AG04449 (cell line): ENCODE measurements at regions of chrX and their contacts with region 1.

Region 1: DNA sequence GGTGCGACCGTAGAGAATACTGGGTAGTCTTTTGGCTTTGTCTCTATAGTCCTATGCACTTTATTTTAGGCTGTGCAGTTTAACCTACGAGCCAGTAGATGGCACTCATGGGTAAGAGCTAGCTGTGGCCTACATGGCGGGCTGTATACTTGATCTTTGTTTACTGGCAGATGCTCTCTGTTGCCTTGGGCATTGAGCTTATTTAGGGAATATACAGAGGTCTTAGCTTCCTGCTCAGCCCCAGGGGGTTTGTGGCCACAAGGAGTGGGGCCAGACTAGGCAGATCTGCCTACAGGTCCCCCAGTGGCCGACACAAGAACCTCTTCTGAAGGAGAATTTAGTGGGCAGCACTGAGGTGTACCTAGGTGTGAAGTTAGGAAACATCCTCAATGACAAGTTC is 227.6 kb upstream of the HDX start:
- DNase-seq: no peak
- H3K4me3 ChIP-seq: no peak overlapping the region
- CTCF ChIP-seq: peak; percentile 57

Region 2: DNA sequence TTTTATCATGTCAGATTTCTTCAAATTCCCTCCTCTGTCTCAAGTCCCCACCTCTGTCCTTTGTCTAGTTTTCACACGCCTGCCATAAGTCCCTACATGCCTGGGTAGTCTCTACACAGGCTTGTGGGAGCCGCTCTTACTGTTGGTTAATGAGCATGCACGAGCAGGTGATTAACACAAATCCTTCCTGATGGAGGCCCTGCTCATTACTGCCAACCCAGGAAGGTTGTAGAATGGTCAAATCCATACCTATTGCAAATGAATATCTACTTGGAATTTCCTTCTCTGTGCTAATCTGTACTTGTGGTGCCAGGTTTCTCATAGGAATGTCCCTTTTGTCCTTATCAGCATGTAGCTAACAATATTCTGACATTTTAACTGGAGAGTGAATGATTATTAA is 19.2 kb before region 1 on chrX:
- CTCF ChIA-PET with region 1: no interaction called
- POLR2A ChIA-PET with region 1: no interaction called
- DNase-seq: no peak
- H3K4me3 ChIP-seq: no peak overlapping the region
- CTCF ChIP-seq: no peak

Region 3: GRCh38 chrX:84760560-84760959 is 30.8 kb after region 1 on chrX:
- CTCF ChIA-PET with region 1: no interaction called
- POLR2A ChIA-PET with region 1: no interaction called
- DNase-seq: no peak
- H3K4me3 ChIP-seq: no peak overlapping the region
- CTCF ChIP-seq: no peak

Region 4: GRCh38 chrX:84907324-84907968 is 177.6 kb after region 1 on chrX:
- CTCF ChIA-PET with region 1: interaction called, 21 read pairs
- POLR2A ChIA-PET with region 1: no interaction called
- DNase-seq: no peak
- H3K4me3 ChIP-seq: no peak overlapping the region
- CTCF ChIP-seq: no peak

Region 5: DNA sequence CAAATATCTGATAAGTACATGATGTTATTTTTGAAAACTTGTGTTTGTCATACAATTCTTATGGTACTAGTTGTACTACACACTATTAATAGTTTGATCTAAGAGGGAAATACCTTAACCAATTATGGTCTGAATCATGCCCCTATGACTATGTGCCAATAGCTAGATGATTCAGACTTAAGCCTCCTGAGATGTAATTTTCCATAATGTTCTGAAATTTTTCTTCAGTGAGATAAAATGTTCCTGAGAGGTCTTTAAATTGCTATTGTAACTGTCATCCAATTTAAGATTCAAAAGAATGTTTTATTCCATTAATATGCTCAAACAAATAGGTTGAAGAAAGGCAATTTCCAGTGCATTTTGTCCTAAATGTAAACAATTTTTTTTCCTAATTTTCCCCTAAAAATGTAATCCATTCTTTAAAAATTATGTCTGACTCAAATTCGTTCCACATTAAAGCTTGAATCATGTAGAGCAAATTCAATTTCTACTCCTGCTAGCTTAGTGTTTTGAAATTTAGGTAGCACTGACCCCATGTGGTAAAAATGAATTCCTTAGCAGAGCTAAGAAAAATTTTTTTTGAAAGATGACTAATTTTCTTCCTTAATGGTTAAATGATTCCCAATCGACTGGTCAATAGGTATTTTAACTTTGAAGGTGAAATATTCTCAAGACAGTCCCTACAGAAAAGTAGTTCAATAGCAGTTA is 323.0 kb after region 1 on chrX:
- CTCF ChIA-PET with region 1: interaction called, 32 read pairs
- POLR2A ChIA-PET with region 1: no interaction called
- DNase-seq: peak; percentile 53
- H3K4me3 ChIP-seq: no peak overlapping the region
- CTCF ChIP-seq: no peak